ENCODE measurements at regions of chr11 and their contacts with region 1.

Region 1: GRCh38 chr11:123560006-123560405 is 94.4 kb downstream of the SCN3B start:
- DNase-seq: peak; percentile 57 to 64
- ATAC-seq: peak; percentile 70 to 84 (median 78)
- H3K4me3 ChIP-seq: peak overlapping the region in 9 of 10 donors; percentile 10 to 48 (median 44)
- H3K27ac ChIP-seq: peak overlapping the region in 7 of 10 donors; percentile 11 to 68 (median 32)
- H3K4me1 ChIP-seq: peaks cover 13 to 56% (median 25%) of the 10 kb centered on the region in 9 donors
- H3K27me3 ChIP-seq: no peaks in the 10 kb centered on the region
- CTCF ChIP-seq: no peak

Region 2: GRCh38 chr11:123206791-123207434 is 353.1 kb before region 1 on chr11:
- intact Hi-C with region 1: no loop called
- DNase-seq: no peak
- ATAC-seq: peak in 6 of 8 donors; percentile 9 to 57 (median 30)
- H3K4me3 ChIP-seq: no peak overlapping the region
- H3K27ac ChIP-seq: no peak overlapping the region
- H3K4me1 ChIP-seq: peaks cover 0 to 23% (median 0%) of the 10 kb centered on the region in 9 donors
- H3K27me3 ChIP-seq: peaks cover 0 to 35% (median 10%) of the 10 kb centered on the region in 7 donors
- CTCF ChIP-seq: no peak

Region 3: DNA sequence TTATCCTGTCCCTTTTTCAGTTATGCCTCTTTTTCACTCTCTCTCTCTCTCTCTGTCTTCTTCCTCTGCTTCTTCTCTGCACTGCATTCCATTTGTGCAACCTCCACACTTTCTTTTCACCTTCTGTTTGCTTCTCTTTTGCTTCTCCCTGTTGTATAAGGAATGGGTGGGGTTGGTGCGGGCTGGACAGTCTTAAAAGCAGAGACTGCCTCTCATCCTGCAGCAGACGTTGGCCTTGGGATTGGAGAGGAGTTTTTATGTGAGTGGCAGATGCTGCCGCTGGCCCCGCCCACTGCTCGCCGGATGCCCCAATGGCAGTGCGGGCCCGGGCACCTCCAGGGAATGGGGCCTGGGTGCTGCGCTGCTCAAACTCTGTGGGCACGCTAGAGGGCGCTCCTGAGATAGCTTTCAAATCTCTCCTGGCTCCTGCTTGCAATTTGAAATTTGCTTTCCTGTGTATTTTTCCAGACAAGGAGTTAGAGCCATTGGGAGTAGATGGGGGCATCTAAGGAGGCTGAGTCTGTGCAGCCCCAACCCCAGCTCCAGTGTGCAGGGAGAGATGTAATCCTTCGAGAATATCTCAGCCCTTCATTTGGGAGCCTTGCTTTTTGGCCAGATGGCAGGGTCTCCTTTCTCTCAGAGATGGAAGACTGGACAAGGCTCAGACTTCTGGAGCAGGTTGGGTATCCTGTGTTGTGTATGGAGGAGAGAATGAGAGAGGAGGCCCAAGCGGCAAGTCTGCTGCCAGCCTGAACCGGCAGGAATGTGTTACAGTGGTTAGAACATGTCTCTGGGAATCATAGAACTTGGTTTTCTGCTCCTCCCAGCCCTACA is 48.8 kb before region 1 on chr11:
- intact Hi-C with region 1: loop called in 3 of 10 experiments (anchors 5 kb)
- DNase-seq: peak; percentile 81 to 83
- ATAC-seq: peak; percentile 86 to 94 (median 92)
- H3K4me3 ChIP-seq: no peak overlapping the region
- H3K27ac ChIP-seq: no peak overlapping the region
- H3K4me1 ChIP-seq: peaks cover 0 to 7% (median 0%) of the 10 kb centered on the region in 9 donors
- H3K27me3 ChIP-seq: no peaks in the 10 kb centered on the region
- CTCF ChIP-seq: peak; percentile 65 to 96 (median 90)

Region 4: DNA sequence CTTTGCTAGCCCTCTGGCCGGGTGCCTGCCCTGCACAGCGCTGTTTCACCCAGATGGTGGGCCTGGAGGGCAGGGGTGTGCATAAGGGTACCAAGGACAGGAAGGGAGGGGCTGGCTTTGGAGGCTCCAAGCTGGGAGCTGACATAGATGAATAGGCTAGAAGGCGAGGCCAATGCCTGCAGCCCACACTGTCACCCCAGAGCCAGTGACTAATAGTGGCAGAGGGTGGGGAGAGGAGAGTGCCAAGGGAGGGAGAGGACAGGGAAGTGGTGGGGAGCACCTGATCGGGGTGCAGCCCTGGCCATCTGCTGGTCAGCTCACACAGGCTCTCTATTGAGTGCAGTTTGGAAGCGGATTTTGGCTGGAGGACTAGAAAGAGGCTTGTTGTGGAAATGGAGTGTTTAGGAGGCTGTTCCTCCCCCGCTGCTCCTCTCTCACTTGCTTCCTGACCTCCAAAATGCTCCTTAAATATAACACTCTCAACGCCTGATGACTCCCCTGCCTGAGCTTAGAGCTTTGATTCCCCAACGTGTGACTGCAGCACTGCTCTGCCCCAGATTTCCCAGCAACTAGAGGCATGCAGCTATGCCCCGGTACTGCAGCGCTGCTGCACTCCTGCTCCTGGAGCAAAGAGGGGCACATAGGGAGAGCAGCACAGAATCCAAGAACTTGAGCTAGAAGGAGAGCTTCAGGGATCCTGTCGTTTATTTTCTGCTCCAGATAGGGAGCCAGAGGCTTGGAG is 40.8 kb before region 1 on chr11:
- intact Hi-C with region 1: loop called in 4 of 10 experiments (anchors 5 kb)
- DNase-seq: no peak
- ATAC-seq: peak; percentile 39 to 80 (median 64)
- H3K4me3 ChIP-seq: no peak overlapping the region
- H3K27ac ChIP-seq: peak overlapping the region; percentile 24 to 75 (median 66)
- H3K4me1 ChIP-seq: peaks cover under 1 to 40% (median 20%) of the 10 kb centered on the region in 9 donors
- H3K27me3 ChIP-seq: no peaks in the 10 kb centered on the region
- CTCF ChIP-seq: no peak